ENCODE measurements at regions of chr10 and their contacts with region 1.

Region 1: DNA sequence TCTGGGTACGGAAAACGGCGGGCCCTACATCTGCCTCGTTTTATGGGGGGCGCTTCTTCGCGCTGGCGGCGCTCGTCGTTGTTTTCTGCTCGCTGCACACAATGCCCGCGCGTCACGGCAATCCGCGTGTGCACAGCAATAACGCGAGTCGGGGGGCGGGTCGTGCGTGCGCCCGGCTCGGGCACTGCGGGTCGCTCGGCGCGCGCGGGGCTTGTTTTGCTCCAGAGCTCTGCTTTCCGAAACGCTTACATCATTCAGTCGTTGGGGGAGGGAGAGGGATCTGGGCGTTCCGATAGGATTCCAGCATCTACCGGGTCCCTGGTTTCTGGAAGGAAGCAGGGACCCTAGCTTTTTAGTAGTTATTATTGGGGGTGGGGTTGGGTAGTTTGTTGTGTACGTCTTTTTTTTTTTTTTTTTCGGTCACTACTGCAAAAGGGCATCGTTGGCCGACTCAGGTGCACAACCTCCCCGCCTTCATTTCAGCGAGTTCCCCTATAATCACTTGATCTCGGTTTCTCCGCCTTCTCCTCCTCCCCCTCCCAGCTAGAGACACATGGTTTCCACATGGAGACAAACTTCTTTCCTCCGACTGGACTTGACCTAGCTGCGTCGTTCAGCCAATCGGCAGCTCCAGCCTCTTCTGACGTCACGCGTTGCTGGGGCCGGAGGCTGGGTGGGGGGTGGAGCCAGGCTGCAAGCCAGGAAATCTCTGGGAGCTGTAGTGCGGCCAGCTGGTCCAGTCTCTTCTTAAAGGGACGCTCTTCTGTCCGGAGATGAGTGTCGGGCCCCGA is 3.5 kb downstream of the MXI1 start:
- DNase-seq: peak; percentile 94
- H3K4me3 Mint-ChIP-seq: peak overlapping the region; percentile 87
- H3K27ac Mint-ChIP-seq: peak overlapping the region; percentile 95
- H3K4me1 Mint-ChIP-seq: peaks cover 57% of the 10 kb centered on the region
- H3K27me3 Mint-ChIP-seq: peaks cover 6% of the 10 kb centered on the region

Region 2: GRCh38 chr10:110007701-110008517 is 203.0 kb before region 1 on chr10 and contains the start of gene ADD3:
- CTCF ChIA-PET with region 1: no interaction called
- POLR2A ChIA-PET with region 1: interaction called, 13 read pairs
- DNase-seq: peak; percentile 89
- H3K4me3 Mint-ChIP-seq: no peak within 1 kb of the TSS
- H3K27ac Mint-ChIP-seq: peak within 1 kb of the TSS; percentile 88
- H3K4me1 Mint-ChIP-seq: peaks cover 38% of the 10 kb centered on the region
- H3K27me3 Mint-ChIP-seq: no peaks in the 10 kb centered on the region
- total RNA-seq, gene ADD3: 400 to 401 TPM

Region 3: DNA sequence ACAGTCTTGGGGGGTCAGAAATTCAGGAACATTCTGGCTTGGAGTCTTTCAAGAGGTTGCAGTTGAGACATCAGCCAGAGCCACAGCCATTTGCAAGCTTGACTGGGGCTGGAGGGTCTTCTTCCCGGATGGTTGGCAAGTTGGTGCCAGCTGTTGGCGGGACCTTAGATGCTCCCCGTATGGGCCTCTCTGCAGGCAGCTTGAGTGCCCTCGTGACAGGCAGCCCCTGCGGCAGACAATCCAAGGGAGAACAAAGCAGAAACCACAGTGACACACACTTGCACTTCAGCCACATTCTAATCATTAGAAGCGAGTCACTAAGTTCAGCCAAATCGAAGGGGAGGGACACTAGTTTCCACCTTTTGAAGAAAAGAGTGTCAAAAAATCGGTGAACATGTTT is 62.9 kb before region 1 on chr10:
- CTCF ChIA-PET with region 1: interaction called, 5 read pairs
- POLR2A ChIA-PET with region 1: interaction called, 36 read pairs
- DNase-seq: peak; percentile 45
- H3K4me3 Mint-ChIP-seq: no peak overlapping the region
- H3K27ac Mint-ChIP-seq: no peak overlapping the region
- H3K4me1 Mint-ChIP-seq: peaks cover 30% of the 10 kb centered on the region
- H3K27me3 Mint-ChIP-seq: peaks cover 57% of the 10 kb centered on the region

Region 4: GRCh38 chr10:110200503-110200902 is 10.4 kb before region 1 on chr10:
- CTCF ChIA-PET with region 1: interaction called, 3 read pairs
- POLR2A ChIA-PET with region 1: interaction called, 10 read pairs
- DNase-seq: no peak
- H3K4me3 Mint-ChIP-seq: no peak overlapping the region
- H3K27ac Mint-ChIP-seq: no peak overlapping the region
- H3K4me1 Mint-ChIP-seq: peaks cover 10% of the 10 kb centered on the region
- H3K27me3 Mint-ChIP-seq: peaks cover 44% of the 10 kb centered on the region

Region 5: GRCh38 chr10:110279407-110279986 is 68.6 kb after region 1 on chr10:
- CTCF ChIA-PET with region 1: interaction called, 29 read pairs
- POLR2A ChIA-PET with region 1: interaction called, 7 read pairs
- DNase-seq: peak; percentile 44
- H3K4me3 Mint-ChIP-seq: no peak overlapping the region
- H3K27ac Mint-ChIP-seq: no peak overlapping the region
- H3K4me1 Mint-ChIP-seq: peaks cover 29% of the 10 kb centered on the region
- H3K27me3 Mint-ChIP-seq: peaks cover 3% of the 10 kb centered on the region

Region 6: GRCh38 chr10:110414563-110415309 is 203.9 kb after region 1 on chr10:
- CTCF ChIA-PET with region 1: no interaction called
- POLR2A ChIA-PET with region 1: no interaction called
- DNase-seq: peak; percentile 95
- H3K4me3 Mint-ChIP-seq: peak overlapping the region; percentile 40
- H3K27ac Mint-ChIP-seq: peak overlapping the region; percentile 88
- H3K4me1 Mint-ChIP-seq: peaks cover 94% of the 10 kb centered on the region
- H3K27me3 Mint-ChIP-seq: no peaks in the 10 kb centered on the region

Region 7: DNA sequence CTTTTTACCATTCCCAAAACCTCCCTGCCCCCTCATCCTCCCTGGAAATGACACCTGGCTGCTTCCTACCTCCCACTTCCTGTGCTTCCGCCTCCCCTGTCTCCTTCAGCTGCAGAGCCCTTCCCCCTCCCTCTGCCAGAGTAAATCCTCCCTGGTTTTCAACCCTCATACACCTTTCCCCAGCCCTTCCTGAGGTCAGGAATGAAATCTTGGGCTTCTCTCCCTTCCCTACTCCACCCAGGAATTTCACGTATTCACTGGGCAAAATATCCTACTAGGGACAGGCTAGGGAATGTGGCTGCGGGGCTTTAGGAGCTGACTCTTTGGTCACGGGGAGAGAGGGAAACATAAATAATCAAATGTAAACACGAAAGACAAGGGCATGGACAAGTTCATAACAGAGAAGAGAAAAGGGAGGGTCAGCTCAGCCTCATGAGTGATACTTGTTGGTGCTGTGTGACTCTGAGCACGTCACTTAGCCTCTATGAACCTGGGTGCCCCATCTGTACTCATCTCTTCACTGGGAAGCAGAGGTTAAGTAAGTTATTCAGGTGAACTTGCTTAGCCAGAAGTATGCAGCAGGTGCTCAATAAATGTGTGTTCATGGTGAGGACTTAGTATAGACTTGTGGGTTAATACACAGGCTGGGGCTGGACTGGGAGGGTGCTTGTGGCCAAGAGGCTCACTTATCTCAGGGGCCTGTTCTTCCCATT is 276.7 kb after region 1 on chr10:
- CTCF ChIA-PET with region 1: no interaction called
- POLR2A ChIA-PET with region 1: no interaction called
- DNase-seq: no peak
- H3K4me3 Mint-ChIP-seq: no peak overlapping the region
- H3K27ac Mint-ChIP-seq: no peak overlapping the region
- H3K4me1 Mint-ChIP-seq: peaks cover 24% of the 10 kb centered on the region
- H3K27me3 Mint-ChIP-seq: peaks cover 2% of the 10 kb centered on the region